Naive thymus-derived CD4-positive, alpha-beta T cell (primary cell): ENCODE measurements at regions of chr9 and their contacts with region 1.

Region 1: DNA sequence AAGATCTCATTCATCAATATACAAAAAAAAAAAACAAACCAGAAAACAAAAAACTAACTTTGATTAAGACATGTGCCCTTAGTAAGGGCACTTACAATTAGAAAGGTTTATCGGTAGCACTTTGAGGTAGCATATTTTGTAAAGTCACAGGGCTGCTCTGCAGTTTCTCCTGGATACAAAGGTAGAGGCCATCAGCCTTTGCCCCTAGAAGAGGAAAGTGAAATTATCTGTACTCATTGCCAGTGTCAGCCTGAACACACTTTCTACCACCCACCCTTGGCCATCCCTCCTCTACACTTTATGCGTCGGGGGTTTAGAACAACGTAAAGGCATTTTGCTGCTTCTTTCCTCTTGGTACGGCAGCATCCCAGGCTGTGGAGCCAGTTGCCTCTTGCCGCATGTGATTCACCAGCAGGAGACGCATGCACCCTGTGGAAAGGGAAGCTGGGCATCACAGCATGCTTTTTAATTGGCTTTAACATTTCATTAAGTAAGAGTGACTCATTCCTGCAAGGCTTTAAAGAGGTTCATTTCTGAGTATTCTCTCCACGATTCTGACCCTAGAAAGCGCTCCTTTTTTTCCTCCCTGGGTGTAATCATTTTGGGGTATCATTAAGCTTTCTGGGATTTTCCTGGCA is 84.6 kb downstream of the CEMIP2 start:
- DNase-seq: no peak
- ATAC-seq: peak; percentile 64
- H3K4me3 ChIP-seq: no peak overlapping the region
- H3K4me3 Mint-ChIP-seq: peak overlapping the region in 6 of 10 donors; percentile 9 to 72 (median 37)
- H3K27ac ChIP-seq: no peak overlapping the region
- H3K27ac Mint-ChIP-seq: peak overlapping the region in 4 of 9 donors; percentile 26 to 70 (median 60)
- H3K4me1 ChIP-seq: peaks cover 20 to 31% of the 10 kb centered on the region in 2 donors
- H3K4me1 Mint-ChIP-seq: peaks cover 30 to 62% (median 57%) of the 10 kb centered on the region in 7 donors
- H3K27me3 ChIP-seq: no peaks in the 10 kb centered on the region
- H3K27me3 Mint-ChIP-seq: no peaks in the 10 kb centered on the region

Region 2: GRCh38 chr9:71638627-71639026 is 45.1 kb before region 1 on chr9:
- CTCF ChIA-PET with region 1: no interaction called
- POLR2A ChIA-PET with region 1: no interaction called
- intact Hi-C with region 1: loop called (anchors 5 kb)
- DNase-seq: no peak
- ATAC-seq: peak; percentile 76
- H3K4me3 ChIP-seq: no peak overlapping the region
- H3K4me3 Mint-ChIP-seq: peak overlapping the region in 5 of 10 donors; percentile 12 to 80 (median 22)
- H3K27ac ChIP-seq: no peak overlapping the region
- H3K27ac Mint-ChIP-seq: peak overlapping the region in 1 of 9 donors; percentile 77
- H3K4me1 ChIP-seq: peaks cover 0 to 13% of the 10 kb centered on the region in 2 donors
- H3K4me1 Mint-ChIP-seq: peaks cover 0 to 33% (median 13%) of the 10 kb centered on the region in 7 donors
- H3K27me3 ChIP-seq: no peaks in the 10 kb centered on the region
- H3K27me3 Mint-ChIP-seq: no peaks in the 10 kb centered on the region

Region 3: GRCh38 chr9:71697882-71698281 is 14.2 kb after region 1 on chr9:
- CTCF ChIA-PET with region 1: no interaction called
- POLR2A ChIA-PET with region 1: interaction called, 3 read pairs
- intact Hi-C with region 1: loop called in 1 of 2 experiments (anchors 2 kb)
- DNase-seq: no peak
- ATAC-seq: no peak
- H3K4me3 ChIP-seq: no peak overlapping the region
- H3K4me3 Mint-ChIP-seq: no peak overlapping the region
- H3K27ac ChIP-seq: no peak overlapping the region
- H3K27ac Mint-ChIP-seq: no peak overlapping the region
- H3K4me1 ChIP-seq: no peaks in the 10 kb centered on the region
- H3K4me1 Mint-ChIP-seq: peaks cover 0 to 12% (median 2%) of the 10 kb centered on the region in 7 donors
- H3K27me3 ChIP-seq: no peaks in the 10 kb centered on the region
- H3K27me3 Mint-ChIP-seq: no peaks in the 10 kb centered on the region

Region 4: GRCh38 chr9:71725590-71726338 is 42.0 kb after region 1 on chr9:
- CTCF ChIA-PET with region 1: no interaction called
- POLR2A ChIA-PET with region 1: no interaction called
- intact Hi-C with region 1: loop called in 1 of 2 experiments (anchors 5 kb)
- DNase-seq: no peak
- ATAC-seq: no peak
- H3K4me3 ChIP-seq: no peak overlapping the region
- H3K4me3 Mint-ChIP-seq: no peak overlapping the region
- H3K27ac ChIP-seq: no peak overlapping the region
- H3K27ac Mint-ChIP-seq: peak overlapping the region in 1 of 9 donors; percentile 18
- H3K4me1 ChIP-seq: no peaks in the 10 kb centered on the region
- H3K4me1 Mint-ChIP-seq: peaks cover 0 to 15% (median 11%) of the 10 kb centered on the region in 7 donors
- H3K27me3 ChIP-seq: no peaks in the 10 kb centered on the region
- H3K27me3 Mint-ChIP-seq: no peaks in the 10 kb centered on the region

Region 5: GRCh38 chr9:72592502-72593403 is 909.0 kb after region 1 on chr9:
- CTCF ChIA-PET with region 1: no interaction called
- POLR2A ChIA-PET with region 1: no interaction called
- intact Hi-C with region 1: no loop called
- DNase-seq: peak in 7 of 9 donors; percentile 11 to 60 (median 47)
- ATAC-seq: peak; percentile 80
- H3K4me3 ChIP-seq: no peak overlapping the region
- H3K4me3 Mint-ChIP-seq: no peak overlapping the region
- H3K27ac ChIP-seq: no peak overlapping the region
- H3K27ac Mint-ChIP-seq: no peak overlapping the region
- H3K4me1 ChIP-seq: no peaks in the 10 kb centered on the region
- H3K4me1 Mint-ChIP-seq: peaks cover 0 to 50% (median 6%) of the 10 kb centered on the region in 7 donors
- H3K27me3 ChIP-seq: no peaks in the 10 kb centered on the region
- H3K27me3 Mint-ChIP-seq: peaks cover 0 to 5% (median 2%) of the 10 kb centered on the region in 5 donors